ENCODE measurements at regions of chr19 and their contacts with region 1.

Region 1: DNA sequence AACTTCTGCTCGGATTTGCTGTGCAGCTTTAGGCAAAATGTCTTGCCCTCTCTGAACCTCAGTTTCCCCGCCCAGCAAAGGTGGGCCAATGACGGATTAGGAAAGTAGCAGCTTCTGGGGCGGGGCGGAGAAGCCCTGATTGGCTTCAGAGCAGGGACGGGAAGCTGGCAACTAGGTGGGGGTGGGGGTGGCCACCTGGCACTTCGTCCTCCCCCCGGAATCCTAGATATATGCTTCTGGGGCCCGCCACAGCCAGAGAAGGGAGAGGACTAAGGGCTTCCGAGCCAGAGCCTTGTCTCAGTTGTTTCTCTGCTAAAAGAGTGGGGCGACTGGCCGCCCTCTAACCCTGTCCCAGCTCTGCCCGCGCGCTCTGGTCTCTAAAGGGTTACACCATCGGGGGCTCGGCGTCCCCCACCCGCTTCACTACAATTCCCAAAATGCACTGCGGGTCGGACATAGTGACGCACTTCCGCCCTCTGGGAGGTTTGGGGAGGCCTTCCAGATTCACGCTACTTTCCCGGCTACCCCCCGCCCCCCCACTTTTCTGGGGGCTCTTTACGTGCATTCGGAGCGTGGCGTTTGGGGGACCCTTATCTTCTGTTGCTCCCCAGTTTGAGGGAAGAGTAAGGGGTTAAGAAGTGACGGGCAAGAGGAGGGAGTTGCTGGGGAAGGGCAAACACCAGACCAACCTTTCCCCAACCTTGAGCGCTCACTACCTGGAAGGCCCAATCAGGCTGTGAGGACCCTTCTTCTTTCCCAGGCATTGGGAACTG is 672 bp upstream of the IRF2BP1 start:
- DNase-seq: peak; percentile 89 to 93
- ATAC-seq: peak; percentile 88 to 98 (median 94)
- H3K4me3 ChIP-seq: peak overlapping the region; percentile 56 to 92 (median 80)
- H3K27ac ChIP-seq: peak overlapping the region; percentile 79 to 97 (median 92)
- H3K4me1 ChIP-seq: peaks cover 15 to 45% (median 37%) of the 10 kb centered on the region in 9 donors
- H3K27me3 ChIP-seq: no peaks in the 10 kb centered on the region
- CTCF ChIP-seq: no peak

Region 2: DNA sequence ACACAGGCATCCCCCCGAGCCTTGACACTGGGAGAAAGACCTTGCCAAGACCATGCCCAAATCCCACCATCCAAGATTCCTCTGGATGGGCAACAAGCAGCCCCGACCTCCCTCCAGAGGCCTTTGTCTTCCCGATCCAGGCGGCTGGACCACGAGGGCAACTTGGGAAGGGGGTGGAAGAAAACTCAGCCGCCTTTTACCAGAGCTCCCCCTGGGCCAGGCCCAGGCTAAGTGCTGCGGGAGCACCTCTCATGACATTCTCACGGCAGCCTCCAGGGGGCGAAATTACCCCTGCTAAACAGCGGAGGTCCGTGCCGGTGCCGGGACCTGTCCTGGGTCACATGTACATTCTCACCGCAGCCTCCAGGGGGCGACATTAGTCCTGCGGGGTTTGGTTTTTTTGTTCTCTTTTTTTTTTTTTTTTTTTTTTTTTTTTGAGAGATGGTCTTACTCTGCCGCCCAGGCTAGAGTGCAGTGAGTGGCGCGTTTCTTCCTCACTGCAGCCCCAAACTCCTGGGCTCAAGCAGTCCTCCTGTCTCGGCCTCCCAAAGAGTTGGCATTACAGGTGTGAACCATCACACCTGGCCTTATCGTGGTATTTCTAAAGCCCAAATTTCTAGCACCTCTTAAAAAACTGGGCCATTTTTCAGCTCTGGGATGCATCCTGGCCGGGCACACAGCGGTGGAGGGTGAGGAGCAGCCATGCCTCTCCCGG is 69.4 kb before region 1 on chr19:
- intact Hi-C with region 1: loop called in 1 of 10 experiments (anchors 10 kb)
- DNase-seq: peak; percentile 94
- ATAC-seq: peak; percentile 79 to 94 (median 90)
- H3K4me3 ChIP-seq: no peak overlapping the region
- H3K27ac ChIP-seq: peak overlapping the region in 2 of 10 donors; percentile 32 to 44
- H3K4me1 ChIP-seq: peaks cover 0 to 31% (median 22%) of the 10 kb centered on the region in 9 donors
- H3K27me3 ChIP-seq: peaks cover 0 to 36% (median 0%) of the 10 kb centered on the region in 7 donors
- CTCF ChIP-seq: peak; percentile 94 to 99 (median 98)

Region 3: GRCh38 chr19:45862564-45863334 is 23.9 kb before region 1 on chr19 and contains the start of gene SYMPK:
- intact Hi-C with region 1: loop called in 2 of 10 experiments (anchors 1 to 2 kb)
- DNase-seq: peak; percentile 99
- ATAC-seq: peak; percentile 99 to 100 (median 99)
- H3K4me3 ChIP-seq: peak within 1 kb of the TSS; percentile 84 to 100 (median 88)
- H3K27ac ChIP-seq: peak within 1 kb of the TSS; percentile 76 to 96 (median 90)
- H3K4me1 ChIP-seq: peaks cover 0 to 33% (median 25%) of the 10 kb centered on the region in 9 donors
- H3K27me3 ChIP-seq: peaks cover 0 to 31% (median 23%) of the 10 kb centered on the region in 7 donors
- CTCF ChIP-seq: no peak
- total RNA-seq, gene SYMPK: 22.4 to 45.0 (median 33.0) TPM

Region 4: DNA sequence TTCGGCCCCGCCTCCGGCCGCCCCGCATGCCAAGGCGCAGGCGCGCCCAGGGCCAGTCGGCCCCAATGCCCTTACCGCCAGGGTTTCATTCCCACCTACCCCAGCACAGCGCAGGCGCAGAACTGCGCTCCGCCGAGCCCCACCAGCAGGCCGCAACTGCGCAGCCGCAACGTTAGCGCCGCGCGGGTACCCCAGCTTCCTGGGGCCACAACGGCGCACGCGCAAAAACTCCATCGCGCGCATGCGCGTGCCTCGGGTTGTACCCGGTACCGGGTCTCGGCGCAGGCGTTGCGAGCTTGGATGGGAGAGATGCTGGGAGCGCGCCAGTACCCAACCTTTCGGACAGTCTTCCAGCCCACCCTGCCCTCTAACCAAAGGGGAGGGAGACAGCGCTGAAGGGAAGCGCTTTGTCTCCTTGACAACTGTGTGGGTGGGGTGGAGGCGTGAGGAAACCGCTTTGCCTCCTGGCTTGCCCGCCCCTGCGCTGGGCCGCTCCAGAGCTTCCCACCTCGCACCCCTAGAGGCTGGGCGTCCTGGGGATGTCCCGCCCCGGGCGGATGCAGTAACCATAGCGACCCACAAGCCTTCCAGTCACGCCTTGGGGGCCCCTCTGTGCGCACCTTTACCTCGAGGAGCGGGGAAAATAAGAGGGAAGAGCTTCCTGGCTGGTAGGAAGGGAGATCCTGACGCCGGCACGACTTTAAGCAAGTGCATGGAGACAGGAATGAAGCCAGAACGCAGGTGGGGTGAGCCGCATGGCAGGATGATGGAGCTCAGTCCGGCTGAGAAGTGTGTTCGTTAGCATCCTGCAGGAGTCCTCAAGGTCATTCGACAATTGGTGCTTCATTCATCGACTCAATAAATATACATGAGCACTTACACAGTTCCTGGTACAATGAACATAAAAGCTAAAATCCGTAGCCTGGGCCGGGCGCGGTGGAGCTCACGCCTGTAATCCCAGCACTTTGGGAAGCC is 16.3 kb after region 1 on chr19:
- intact Hi-C with region 1: loop called in 1 of 10 experiments (anchors 1 kb)
- DNase-seq: peak; percentile 97 to 100
- ATAC-seq: peak; percentile 95 to 98 (median 96)
- H3K4me3 ChIP-seq: peak overlapping the region; percentile 58 to 87 (median 78)
- H3K27ac ChIP-seq: peak overlapping the region in 9 of 10 donors; percentile 78 to 88 (median 83)
- H3K4me1 ChIP-seq: peaks cover 0 to 20% (median 18%) of the 10 kb centered on the region in 9 donors
- H3K27me3 ChIP-seq: no peaks in the 10 kb centered on the region
- CTCF ChIP-seq: no peak